Activated CD8-positive, alpha-beta T cell treated with anti-CD3 and anti-CD28 coated beads for 36 hours (primary cell): ENCODE measurements at regions of chr18 and their contacts with region 1.

Region 1: DNA sequence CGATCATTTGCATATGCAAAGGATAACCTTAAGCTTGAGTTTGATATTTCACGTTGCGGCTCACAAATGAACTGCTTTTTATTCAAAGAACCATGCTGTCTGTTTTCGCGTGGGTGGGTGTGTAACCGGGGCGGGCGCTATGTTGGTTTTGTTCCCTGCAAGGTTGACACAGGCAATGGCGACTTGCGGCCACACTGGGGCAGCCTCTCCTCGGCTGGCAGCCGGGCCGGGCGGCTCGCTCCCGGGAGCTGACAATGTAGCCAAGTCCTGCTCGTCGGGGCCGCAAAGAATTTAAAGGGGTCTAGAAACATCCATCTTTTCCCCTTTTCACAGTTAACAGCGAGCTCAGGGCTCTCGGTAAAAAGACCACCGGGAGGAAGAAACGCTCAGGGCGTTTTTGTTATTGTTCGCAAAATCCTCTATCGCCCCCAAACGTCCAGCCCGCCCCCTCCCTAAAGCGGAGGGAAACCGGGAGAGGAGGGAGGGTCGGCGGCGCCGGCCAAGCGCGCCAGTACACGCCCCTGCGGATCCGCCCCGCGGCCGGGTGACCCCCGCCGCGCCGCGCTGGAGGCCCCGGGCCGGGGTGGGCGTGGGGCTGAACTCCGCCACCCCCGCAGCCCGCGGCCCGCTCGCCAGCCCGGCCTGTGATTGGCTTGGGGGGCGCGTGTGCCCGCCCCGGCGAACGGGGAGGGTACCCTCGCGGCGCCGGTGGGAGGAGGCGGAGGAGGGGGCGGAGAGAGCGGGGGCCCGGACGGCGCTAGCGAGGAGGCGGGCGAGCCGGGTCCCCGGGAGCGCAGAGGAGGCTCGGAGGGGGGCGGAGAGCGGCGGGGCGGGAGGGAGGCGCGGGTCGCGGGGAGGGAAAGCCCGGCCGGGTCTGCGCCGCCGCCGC is at the start of gene NEDD4L:
- DNase-seq: peak; percentile 95
- ATAC-seq: peak; percentile 86
- H3K4me3 Mint-ChIP-seq: peak within 1 kb of the TSS; percentile 93
- H3K27ac Mint-ChIP-seq: peak within 1 kb of the TSS; percentile 65
- H3K4me1 Mint-ChIP-seq: peaks cover 29% of the 10 kb centered on the region
- H3K27me3 Mint-ChIP-seq: peaks cover 15% of the 10 kb centered on the region
- CTCF ChIP-seq: peak; percentile 66
- total RNA-seq, gene NEDD4L: 7.5 to 8.5 TPM

Region 2: DNA sequence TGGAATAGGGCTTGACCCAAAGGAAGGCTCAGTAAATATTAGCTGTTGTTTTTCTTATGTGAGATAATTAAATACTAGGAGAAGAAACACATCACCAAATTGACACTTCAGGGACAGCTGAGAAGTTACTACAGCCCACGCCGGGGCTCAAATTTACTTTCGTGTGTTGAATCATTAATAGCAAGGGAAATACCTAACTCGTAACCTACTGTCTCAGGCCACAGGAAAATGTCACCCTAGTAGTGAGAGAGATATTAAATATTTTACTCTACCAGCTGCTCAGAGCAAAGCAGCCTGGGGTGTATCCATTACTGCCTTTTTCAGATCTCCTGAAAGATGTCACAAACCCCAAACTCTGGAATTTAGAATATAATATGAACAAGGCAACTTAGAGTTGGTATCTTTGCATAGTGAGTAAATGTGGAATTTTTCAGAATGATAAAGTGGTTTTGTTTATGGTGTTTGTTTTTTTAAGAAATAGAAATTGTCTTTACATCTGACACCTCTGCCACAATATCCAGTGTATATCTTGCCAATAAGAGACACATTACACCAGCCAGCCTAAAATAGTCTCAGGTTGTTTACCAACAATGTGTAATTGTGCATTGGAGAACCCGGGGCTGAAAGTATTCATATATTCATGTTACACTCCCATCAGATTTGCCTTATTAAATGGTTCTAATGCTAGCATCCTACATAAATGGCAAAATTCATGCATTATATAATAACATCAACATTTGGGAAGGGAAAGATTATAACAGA is 289.0 kb before region 1 on chr18:
- CTCF ChIA-PET with region 1: no interaction called
- POLR2A ChIA-PET with region 1: no interaction called
- intact Hi-C with region 1: no loop called
- DNase-seq: no peak
- ATAC-seq: no peak
- H3K4me3 Mint-ChIP-seq: no peak overlapping the region
- H3K27ac Mint-ChIP-seq: no peak overlapping the region
- H3K4me1 Mint-ChIP-seq: peaks cover 5% of the 10 kb centered on the region
- H3K27me3 Mint-ChIP-seq: no peaks in the 10 kb centered on the region
- CTCF ChIP-seq: no peak

Region 3: DNA sequence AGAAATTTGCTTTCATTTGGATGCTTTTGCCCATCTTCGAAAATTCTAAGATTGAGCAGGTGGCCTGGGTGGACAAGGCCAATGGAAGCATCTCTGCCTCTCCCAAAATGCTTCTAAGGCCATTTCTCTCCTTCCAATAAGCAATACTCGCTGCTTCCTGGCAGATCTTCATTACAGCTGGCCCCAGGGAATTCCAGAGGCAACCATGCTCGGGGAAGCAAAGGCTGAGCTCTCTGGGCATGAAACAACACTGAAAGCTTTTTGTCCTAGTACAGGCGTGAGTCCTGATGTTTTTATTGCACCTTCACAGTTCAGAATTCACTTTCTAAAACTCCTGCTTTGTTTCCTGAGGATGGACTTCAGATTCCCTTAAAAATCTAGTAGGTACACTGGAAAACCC is 11.5 kb before region 1 on chr18:
- CTCF ChIA-PET with region 1: interaction called, 13 read pairs
- POLR2A ChIA-PET with region 1: no interaction called
- intact Hi-C with region 1: no loop called
- DNase-seq: no peak
- ATAC-seq: no peak
- H3K4me3 Mint-ChIP-seq: no peak overlapping the region
- H3K27ac Mint-ChIP-seq: no peak overlapping the region
- H3K4me1 Mint-ChIP-seq: no peaks in the 10 kb centered on the region
- H3K27me3 Mint-ChIP-seq: peaks cover 14% of the 10 kb centered on the region
- CTCF ChIP-seq: no peak

Region 4: DNA sequence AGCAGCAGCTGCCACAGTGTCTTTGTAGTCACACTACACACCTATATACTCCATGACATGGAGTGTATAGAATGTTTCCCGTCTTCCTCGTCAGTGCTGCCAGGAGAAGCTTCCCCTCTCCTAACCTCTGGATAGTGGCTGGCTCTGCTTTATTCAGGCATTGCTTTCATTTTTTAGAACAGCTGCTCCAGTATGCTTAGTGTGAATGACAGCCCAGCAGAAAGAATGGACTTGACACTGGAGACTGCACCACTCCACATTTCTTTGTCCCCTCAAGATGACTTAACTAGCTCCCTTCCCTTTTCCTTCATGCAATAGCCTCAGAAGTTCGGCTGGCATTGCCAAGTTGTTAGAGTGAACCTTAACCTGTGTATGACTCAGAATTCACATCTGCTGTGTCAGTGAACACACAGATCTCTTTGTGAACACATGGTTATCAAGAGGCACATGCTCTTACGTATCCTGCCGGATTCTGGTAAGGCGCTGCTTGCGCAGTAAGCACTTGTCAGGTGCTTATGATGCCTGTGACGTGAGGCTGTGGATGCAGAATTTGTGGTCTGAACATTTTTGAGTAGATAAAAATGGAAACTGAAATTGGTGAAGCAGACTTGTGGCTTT is 74.2 kb after region 1 on chr18:
- CTCF ChIA-PET with region 1: interaction called, 19 read pairs
- POLR2A ChIA-PET with region 1: no interaction called
- intact Hi-C with region 1: loop called (anchors 1 kb)
- DNase-seq: no peak
- ATAC-seq: no peak
- H3K4me3 Mint-ChIP-seq: no peak overlapping the region
- H3K27ac Mint-ChIP-seq: no peak overlapping the region
- H3K4me1 Mint-ChIP-seq: peaks cover 6% of the 10 kb centered on the region
- H3K27me3 Mint-ChIP-seq: no peaks in the 10 kb centered on the region
- CTCF ChIP-seq: no peak

Region 5: GRCh38 chr18:58344861-58345463 is 301.2 kb after region 1 on chr18:
- CTCF ChIA-PET with region 1: no interaction called
- POLR2A ChIA-PET with region 1: no interaction called
- intact Hi-C with region 1: no loop called
- DNase-seq: no peak
- ATAC-seq: no peak
- H3K4me3 Mint-ChIP-seq: no peak overlapping the region
- H3K27ac Mint-ChIP-seq: no peak overlapping the region
- H3K4me1 Mint-ChIP-seq: no peaks in the 10 kb centered on the region
- H3K27me3 Mint-ChIP-seq: no peaks in the 10 kb centered on the region
- CTCF ChIP-seq: no peak